ENCODE measurements at regions of chr12 and their contacts with region 1.

Region 1: DNA sequence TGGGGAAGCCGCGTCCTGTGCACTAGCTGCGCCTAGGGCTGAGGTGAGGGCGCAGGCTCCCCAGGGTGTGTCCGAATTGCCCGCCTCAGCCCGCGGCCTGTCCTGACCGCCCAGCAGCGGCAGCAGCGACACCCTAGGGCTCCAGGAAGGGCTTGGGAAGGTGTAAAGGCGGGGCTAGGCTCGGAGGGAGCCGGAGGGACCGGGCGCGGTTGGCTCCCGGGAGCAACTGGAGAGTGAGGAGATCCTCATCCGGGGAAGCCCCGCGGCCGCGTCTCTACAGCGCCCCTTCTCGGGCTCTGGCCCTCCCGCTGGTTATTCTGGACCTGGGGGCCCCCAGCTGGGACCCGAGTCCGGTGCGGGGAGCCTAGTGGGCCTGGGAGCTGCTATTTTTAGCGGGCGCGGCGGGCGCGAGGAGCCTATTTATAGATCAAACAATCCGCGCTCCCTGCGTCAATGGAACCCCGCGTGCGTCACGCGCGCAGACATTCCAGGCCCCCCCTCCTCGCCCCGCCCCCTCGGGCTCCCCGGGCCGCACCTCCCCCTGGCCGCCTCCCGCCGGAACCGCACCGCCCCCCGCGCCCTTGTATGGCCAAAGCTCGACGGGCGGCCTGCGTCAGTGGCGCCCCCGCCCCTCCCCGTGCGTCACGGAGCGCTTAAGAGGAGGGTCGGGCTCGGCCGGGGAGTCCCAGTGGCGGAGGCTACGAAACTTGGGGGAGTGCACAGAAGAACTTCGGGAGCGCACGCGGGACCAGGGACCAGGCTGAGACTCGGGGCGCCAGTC is at the start of gene NR4A1:
- DNase-seq: peak; percentile 98
- H3K4me3 ChIP-seq: peak within 1 kb of the TSS; percentile 53 to 65
- H3K27ac ChIP-seq: peak within 1 kb of the TSS in 1 of 2 experiments; percentile 71; a peak in 3 of 4 replicates
- H3K4me1 ChIP-seq: peaks cover 8 to 12% of the 10 kb centered on the region in 2 experiments; a peak in 2 of 4 replicates
- H3K27me3 ChIP-seq: no peaks in the 10 kb centered on the region
- CTCF ChIP-seq: peak; percentile 25
- EP300 ChIP-seq: no peak
- RAD21 ChIP-seq: no peak
- polyA plus RNA-seq, gene NR4A1: 75.2 and 120 TPM in 2 replicates

Region 2: DNA sequence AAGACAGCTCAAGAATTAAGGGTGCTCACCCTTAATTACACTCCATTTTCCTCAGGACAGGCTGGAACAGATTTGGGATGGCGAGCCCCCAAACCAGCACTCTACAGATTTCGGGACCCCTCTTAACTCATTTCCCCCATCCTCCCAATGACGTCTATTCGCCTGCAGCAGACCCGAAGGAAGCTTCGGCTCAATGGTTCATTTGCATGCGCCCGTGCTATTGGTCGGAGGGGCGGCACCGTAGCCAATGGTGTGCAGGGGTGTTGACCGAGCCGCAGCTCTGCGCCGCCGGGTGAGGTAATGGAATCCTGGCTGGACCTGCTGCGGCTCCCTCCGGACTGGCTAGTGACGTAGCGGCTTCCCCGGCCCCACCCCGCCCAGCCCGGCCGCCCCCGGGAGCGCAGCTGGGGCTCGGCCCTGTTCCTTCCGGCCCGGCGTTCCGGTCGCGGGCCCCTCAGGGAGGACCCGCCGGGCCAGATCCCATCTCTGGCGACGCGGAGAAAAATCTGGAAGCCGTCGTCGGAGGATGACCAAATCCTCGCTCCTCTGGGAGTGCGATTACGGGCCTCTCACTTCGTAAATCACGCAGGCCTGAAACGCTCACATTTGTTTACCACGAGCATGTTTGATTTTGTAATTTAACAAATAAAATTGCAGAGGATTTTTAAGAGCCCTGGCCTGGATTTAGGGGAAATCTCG is 18.0 kb before region 1 on chr12:
- CTCF ChIA-PET with region 1: interaction called, 279 read pairs
- POLR2A ChIA-PET with region 1: interaction called, 3 read pairs
- DNase-seq: peak; percentile 96
- H3K4me3 ChIP-seq: peak overlapping the region; percentile 46 to 53
- H3K27ac ChIP-seq: peak overlapping the region; percentile 82 to 94
- H3K4me1 ChIP-seq: peaks cover 0 to 27% of the 10 kb centered on the region in 2 experiments; a peak in 2 of 4 replicates
- H3K27me3 ChIP-seq: no peaks in the 10 kb centered on the region
- CTCF ChIP-seq: no peak
- EP300 ChIP-seq: no peak
- RAD21 ChIP-seq: no peak

Measured in SK-N-SH (cell line).